Tibial artery (tissue), 4 donors: ENCODE measurements at regions of chr4 and their contacts with region 1.

Region 1: DNA sequence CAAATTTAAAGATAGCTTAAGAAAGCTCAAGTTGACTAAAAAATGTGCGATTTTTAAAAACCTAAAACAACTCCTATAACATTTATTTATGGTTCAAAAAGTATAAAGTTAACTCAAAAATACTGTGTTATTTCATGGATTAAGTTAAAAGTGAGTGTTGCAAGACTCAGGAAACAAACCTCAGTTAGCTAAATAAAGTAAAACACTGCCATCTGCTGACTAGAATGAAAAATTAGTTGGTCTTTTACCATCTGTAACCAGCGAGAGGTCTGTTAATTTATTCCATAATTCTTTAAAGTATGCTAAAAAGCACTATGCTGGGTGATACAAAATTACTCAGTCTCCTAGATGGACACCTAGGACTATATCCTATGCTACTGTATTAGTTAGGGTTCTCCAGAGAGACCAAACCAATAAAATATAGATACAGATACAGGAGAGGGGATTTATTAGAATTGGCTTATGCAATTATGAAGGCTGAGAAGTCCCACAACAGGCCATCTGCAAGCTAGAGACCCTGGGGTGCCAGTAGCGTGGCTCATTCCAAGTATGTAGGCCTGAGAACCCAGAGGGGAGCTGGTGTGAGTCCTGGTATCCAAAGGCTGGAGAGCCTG is 4.9 kb upstream of the WDFY3 start:
- DNase-seq: no peak
- H3K4me3 ChIP-seq: no peak overlapping the region
- H3K27ac ChIP-seq: no peak overlapping the region
- H3K4me1 ChIP-seq: peaks cover 0 to 15% (median 2%) of the 10 kb centered on the region in 4 donors
- H3K27me3 ChIP-seq: no peaks in the 10 kb centered on the region
- CTCF ChIP-seq: peak; percentile 51 to 65

Region 2: DNA sequence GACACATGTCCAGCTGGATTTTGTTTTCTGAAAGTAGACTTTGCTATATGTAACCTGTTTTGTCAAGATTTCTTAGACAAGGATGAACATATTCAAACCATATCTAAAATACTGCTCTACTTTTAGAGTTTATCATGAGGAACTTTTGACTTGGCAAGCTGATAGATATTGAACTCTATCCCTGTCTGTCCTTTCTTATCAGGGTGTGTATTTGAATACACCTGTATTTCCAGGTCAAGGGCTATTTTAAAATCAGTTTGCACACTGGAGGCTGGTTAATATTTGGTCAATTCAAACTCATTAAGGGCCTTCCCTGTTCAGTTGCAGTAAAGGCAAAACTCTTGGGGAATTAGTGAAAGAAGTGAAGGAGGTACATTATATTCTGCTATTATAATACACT is 386.2 kb before region 1 on chr4:
- intact Hi-C with region 1: no loop called
- DNase-seq: no peak
- H3K4me3 ChIP-seq: no peak overlapping the region
- H3K27ac ChIP-seq: no peak overlapping the region
- H3K4me1 ChIP-seq: peaks cover 0 to 17% (median 9%) of the 10 kb centered on the region in 4 donors
- H3K27me3 ChIP-seq: peaks cover 0 to 7% of the 10 kb centered on the region in 2 donors
- CTCF ChIP-seq: no peak

Region 3: GRCh38 chr4:84750253-84750959 is 221.0 kb before region 1 on chr4:
- intact Hi-C with region 1: loop called (anchors 5 kb)
- DNase-seq: no peak
- H3K4me3 ChIP-seq: no peak overlapping the region
- H3K27ac ChIP-seq: no peak overlapping the region
- H3K4me1 ChIP-seq: no peaks in the 10 kb centered on the region
- H3K27me3 ChIP-seq: no peaks in the 10 kb centered on the region
- CTCF ChIP-seq: peak; percentile 51 to 78